ENCODE measurements at regions of chr11 and their contacts with region 1.

Region 1: GRCh38 chr11:100849009-100849900 is 162.2 kb downstream of the ARHGAP42 start:
- DNase-seq: no peak
- H3K4me3 ChIP-seq: no peak overlapping the region
- CTCF ChIP-seq: no peak
- POLR2A ChIP-seq: no peak

Region 2: DNA sequence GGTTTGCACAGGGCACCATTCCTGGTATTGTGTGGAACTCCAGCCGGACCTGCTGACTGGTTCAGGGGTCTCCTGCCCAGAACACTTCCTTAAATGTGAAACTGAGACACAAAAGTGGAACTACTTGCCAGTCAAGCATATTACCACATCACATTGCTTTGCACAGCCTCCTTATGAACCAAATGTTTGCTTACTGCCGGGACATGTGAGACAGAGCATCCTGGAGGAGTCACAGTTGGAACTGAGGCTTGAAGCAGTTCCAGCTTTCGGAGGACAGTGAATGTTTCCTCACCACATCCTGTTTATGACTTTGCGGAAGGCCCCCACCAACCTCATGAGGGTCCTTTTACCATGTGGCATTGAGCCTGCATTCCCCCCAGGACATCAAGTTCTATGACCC is 267.9 kb before region 1 on chr11:
- intact Hi-C with region 1: loop called (anchors 5 kb)
- DNase-seq: peak; percentile 74 to 86
- H3K4me3 ChIP-seq: no peak overlapping the region
- CTCF ChIP-seq: no peak
- POLR2A ChIP-seq: no peak

Region 3: GRCh38 chr11:100681064-100681502 is 168.2 kb before region 1 on chr11:
- intact Hi-C with region 1: loop called (anchors 5 kb)
- DNase-seq: peak; percentile 80 to 93
- H3K4me3 ChIP-seq: no peak overlapping the region
- CTCF ChIP-seq: no peak
- POLR2A ChIP-seq: no peak

Region 4: GRCh38 chr11:102026212-102026611 is 1177.0 kb after region 1 on chr11:
- intact Hi-C with region 1: no loop called
- DNase-seq: no peak
- H3K4me3 ChIP-seq: no peak overlapping the region
- CTCF ChIP-seq: no peak
- POLR2A ChIP-seq: no peak